ACHN (cell line): ENCODE measurements at regions of chr5 and their contacts with region 1.

Region 1: GRCh38 chr5:149268928-149269557 is 2.6 kb upstream of the AFAP1L1 start:
- DNase-seq: peak; percentile 68

Region 2: GRCh38 chr5:148685520-148686134 is 583.4 kb before region 1 on chr5:
- in situ Hi-C with region 1: no loop called
- DNase-seq: no peak

Region 3: DNA sequence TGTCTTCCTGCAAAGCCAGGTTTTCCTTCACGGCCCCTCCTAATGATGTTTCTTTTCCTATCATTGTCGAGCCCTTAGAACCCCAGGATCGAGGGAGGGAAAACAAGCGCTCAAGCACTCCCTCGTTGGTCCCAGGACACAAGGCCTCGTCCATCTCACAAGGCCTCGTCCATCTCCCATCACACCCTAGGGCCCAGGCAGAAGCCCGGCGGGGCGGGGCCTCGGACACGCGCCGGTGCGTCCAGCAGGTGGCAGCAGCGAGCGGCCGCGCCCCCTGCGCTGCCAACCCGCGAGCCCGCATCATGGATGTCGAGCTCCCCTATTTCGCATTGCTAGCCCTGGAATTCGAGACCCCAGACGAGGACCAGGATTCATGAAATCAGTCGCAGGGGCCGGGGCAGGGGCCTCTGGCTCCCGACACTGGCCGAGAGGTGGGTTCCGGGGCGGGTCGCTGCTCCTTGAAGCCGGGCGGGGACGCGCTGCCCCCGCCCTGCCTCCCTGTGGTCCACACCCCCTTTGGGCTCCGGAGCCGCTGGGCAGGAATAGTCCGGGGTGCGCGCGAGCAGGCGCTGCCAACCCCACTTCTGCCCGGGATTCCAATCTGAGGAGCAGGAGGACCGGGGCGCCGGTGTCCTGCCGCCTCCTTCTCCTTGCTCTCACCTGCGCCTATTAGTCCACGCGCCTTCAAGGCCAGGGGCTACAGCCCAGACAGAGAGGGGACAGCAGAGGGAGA is 127.7 kb before region 1 on chr5 and contains the start of gene ABLIM3:
- in situ Hi-C with region 1: loop called (anchors 25 kb)
- DNase-seq: peak; percentile 67

Region 4: GRCh38 chr5:149960272-149961185 is 691.5 kb after region 1 on chr5 and contains the start of gene SLC26A2:
- in situ Hi-C with region 1: no loop called
- DNase-seq: peak; percentile 97